Left cardiac atrium (tissue), 4 donors: ENCODE measurements at regions of chrX and their contacts with region 1.

Region 1: GRCh38 chrX:107894038-107894437 is 68.4 kb downstream of the MID2 start:
- DNase-seq: no peak
- ATAC-seq: peak in 1 of 2 donors; percentile 54

Region 2: DNA sequence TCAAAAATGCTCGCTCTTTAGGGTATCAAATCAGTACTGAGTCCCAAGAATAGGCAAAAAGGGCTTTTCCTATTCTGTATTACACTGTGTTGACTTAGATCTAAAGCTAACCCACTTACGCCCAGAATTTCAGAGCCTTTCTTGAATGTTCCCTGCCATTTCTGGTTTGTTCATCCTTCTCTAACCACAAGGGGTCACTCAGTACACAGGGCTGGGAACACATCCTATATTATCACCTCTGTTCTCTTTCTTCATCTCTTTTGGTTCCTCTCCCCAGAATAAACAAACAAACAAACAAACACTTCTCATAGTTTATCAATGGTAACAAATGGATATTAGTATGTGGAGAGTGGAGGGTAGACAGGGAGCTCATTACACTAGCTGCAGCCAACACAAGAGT is 868.5 kb before region 1 on chrX:
- intact Hi-C with region 1: loop called in 1 of 2 experiments (anchors 10 kb)
- DNase-seq: no peak
- ATAC-seq: no peak

Region 3: GRCh38 chrX:107654872-107655761 is 238.9 kb before region 1 on chrX:
- intact Hi-C with region 1: loop called in 1 of 2 experiments (anchors 5 kb)
- DNase-seq: peak; percentile 63
- ATAC-seq: peak; percentile 69 to 86

Region 4: DNA sequence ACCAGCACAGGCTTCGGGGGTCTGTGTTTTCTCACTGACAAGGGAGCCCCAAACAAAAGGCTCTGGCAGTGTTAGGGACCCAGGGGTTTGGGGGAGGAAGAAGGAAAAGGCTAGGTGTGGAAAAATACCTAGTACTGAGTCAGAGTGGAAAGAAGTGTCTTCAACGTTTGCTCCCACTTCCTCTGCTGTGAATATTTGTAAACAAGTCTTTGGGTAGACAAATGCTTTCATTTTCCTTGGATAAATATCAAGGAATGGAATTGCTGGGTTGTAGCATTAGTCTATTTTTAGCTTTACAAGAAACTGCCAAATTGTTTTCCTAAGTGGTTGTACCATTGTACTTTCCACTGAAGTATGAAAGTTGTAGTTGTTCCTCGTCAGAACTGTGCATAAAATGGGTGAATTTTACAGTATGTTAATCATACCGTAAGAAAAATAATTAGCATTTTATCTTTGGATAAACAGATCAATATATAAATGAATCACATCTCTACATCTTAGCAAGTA is 563.0 kb after region 1 on chrX:
- intact Hi-C with region 1: no loop called
- DNase-seq: no peak
- ATAC-seq: no peak